ENCODE measurements at regions of chr1 and their contacts with region 1.

Region 1: DNA sequence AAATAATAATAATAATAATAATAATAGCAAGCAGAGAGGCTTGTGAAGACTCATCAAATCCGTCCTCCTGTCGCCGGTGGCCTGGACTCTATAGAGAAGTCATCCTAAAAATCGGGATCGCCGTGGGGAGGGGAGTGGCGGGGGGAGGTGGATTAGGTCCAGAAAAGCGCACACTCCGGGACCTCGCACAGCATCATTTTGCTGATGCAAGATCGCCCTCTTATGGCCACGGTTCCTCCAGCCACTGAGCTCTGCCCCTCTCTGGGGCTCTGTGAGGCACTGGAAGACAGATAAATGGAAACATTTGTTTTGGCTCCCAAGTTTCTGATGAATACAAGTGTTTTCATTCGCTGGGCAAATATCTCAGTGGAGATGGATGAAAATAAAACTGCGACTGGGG is 612.0 kb downstream of the MATN1 start:
- DNase-seq: peak; percentile 57
- H3K4me3 ChIP-seq: no peak overlapping the region
- H3K27ac ChIP-seq: no peak overlapping the region
- H3K4me1 ChIP-seq: no peaks in the 10 kb centered on the region
- H3K27me3 ChIP-seq: peaks cover 4% of the 10 kb centered on the region
- CTCF ChIP-seq: peak; percentile 52

Region 2: GRCh38 chr1:29793101-29793546 is 318.3 kb before region 1 on chr1:
- intact Hi-C with region 1: loop called (anchors 2 kb)
- DNase-seq: peak; percentile 85
- H3K4me3 ChIP-seq: no peak overlapping the region
- H3K27ac ChIP-seq: no peak overlapping the region
- H3K4me1 ChIP-seq: no peaks in the 10 kb centered on the region
- H3K27me3 ChIP-seq: no peaks in the 10 kb centered on the region
- CTCF ChIP-seq: peak; percentile 64

Region 3: DNA sequence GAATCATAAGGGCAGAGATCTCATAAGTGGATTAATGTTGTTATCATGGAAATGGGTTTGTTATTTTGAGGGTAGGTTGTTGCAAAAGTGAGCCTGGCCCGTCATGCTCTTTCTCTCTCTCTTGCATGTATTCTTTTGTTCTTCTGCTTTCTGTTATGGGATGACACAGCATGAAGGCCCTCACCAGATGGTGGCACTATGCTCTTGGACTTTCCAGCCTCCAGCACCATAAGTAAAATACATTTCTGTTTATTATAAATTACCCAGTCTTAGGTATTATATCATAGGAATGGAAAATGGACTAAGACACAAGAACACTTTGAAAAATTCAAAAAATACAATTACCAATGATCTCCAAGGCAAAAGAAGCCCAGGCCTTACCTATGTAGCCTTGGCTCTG is 199.0 kb before region 1 on chr1:
- intact Hi-C with region 1: loop called (anchors 2 kb)
- DNase-seq: no peak
- H3K4me3 ChIP-seq: no peak overlapping the region
- H3K27ac ChIP-seq: no peak overlapping the region
- H3K4me1 ChIP-seq: no peaks in the 10 kb centered on the region
- H3K27me3 ChIP-seq: no peaks in the 10 kb centered on the region
- CTCF ChIP-seq: peak; percentile 13

Region 4: GRCh38 chr1:29984538-29985357 is 126.7 kb before region 1 on chr1:
- intact Hi-C with region 1: no loop called
- DNase-seq: peak; percentile 15
- H3K4me3 ChIP-seq: no peak overlapping the region
- H3K27ac ChIP-seq: no peak overlapping the region
- H3K4me1 ChIP-seq: no peaks in the 10 kb centered on the region
- H3K27me3 ChIP-seq: no peaks in the 10 kb centered on the region
- CTCF ChIP-seq: no peak

Region 5: GRCh38 chr1:30268923-30269666 is 157.7 kb after region 1 on chr1:
- intact Hi-C with region 1: no loop called
- DNase-seq: no peak
- H3K4me3 ChIP-seq: no peak overlapping the region
- H3K27ac ChIP-seq: no peak overlapping the region
- H3K4me1 ChIP-seq: no peaks in the 10 kb centered on the region
- H3K27me3 ChIP-seq: no peaks in the 10 kb centered on the region
- CTCF ChIP-seq: no peak